ENCODE measurements at regions of chr5 and their contacts with region 1.

Region 1: GRCh38 chr5:150458819-150459557 is 9.4 kb upstream of the RPS14 start:
- DNase-seq: peak; percentile 33
- H3K4me3 ChIP-seq: peak overlapping the region in 1 of 3 experiments; percentile 17
- H3K27ac ChIP-seq: no peak overlapping the region
- H3K4me1 ChIP-seq: peaks cover 4% of the 10 kb centered on the region
- H3K27me3 ChIP-seq: no peaks in the 10 kb centered on the region
- CTCF ChIP-seq: peak; percentile 57 to 88
- POLR2A ChIP-seq: no peak

Region 2: GRCh38 chr5:150017226-150018005 is 441.6 kb before region 1 on chr5:
- CTCF ChIA-PET with region 1: no interaction called
- POLR2A ChIA-PET with region 1: no interaction called
- dilution Hi-C with region 1: no loop called
- intact Hi-C with region 1: no loop called
- DNase-seq: peak; percentile 69
- H3K4me3 ChIP-seq: no peak overlapping the region
- H3K27ac ChIP-seq: peak overlapping the region; percentile 61
- H3K4me1 ChIP-seq: peaks cover 38% of the 10 kb centered on the region
- H3K27me3 ChIP-seq: no peaks in the 10 kb centered on the region
- CTCF ChIP-seq: no peak
- POLR2A ChIP-seq: no peak

Region 3: DNA sequence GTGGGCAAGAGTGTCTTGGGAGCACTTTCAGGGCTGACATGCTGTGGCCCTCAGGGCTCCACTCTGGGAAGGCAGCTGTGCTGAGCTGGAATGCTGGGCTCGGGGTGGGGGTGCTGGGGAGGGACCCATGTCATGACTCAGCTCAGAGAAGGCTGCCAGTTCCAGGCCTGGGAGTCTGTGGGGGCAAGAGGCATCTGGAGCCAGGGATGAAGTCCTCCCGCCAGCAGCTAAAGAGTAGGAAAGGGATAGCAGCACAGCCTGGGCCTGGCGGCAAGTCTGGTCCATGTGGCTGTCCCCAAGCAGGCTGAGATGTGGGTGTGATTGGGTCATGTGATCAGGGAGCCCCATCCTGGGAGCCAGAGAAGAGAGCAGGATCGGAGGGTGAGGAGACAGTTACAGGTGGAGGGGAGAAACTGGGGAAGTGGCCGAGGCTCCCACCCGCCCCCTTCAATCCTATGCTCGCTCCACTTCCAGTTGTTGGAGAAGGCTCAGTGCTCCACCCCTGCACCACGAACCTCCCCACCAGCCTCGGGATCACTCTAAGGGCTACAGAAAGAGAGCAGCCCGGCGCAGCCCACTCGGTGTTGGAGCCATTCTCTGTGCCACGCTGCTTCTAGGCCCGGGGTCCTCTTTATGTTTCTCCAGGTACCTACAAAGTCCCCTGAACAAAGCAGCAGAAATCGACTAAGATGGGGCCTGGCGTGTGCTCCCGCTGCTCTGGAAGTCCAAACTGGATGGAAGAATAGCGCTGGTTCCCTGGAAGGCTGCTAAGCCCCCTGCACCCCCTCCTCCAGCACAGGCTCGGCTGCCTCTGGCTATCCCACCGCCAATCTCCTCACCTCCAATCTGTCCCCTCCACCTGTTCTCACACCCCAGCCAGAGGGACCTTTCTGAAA is 315.4 kb before region 1 on chr5:
- CTCF ChIA-PET with region 1: no interaction called
- POLR2A ChIA-PET with region 1: no interaction called
- dilution Hi-C with region 1: no loop called
- intact Hi-C with region 1: no loop called
- DNase-seq: no peak
- H3K4me3 ChIP-seq: no peak overlapping the region
- H3K27ac ChIP-seq: no peak overlapping the region
- H3K4me1 ChIP-seq: peaks cover 12% of the 10 kb centered on the region
- H3K27me3 ChIP-seq: no peaks in the 10 kb centered on the region
- CTCF ChIP-seq: no peak
- POLR2A ChIP-seq: no peak

Region 4: DNA sequence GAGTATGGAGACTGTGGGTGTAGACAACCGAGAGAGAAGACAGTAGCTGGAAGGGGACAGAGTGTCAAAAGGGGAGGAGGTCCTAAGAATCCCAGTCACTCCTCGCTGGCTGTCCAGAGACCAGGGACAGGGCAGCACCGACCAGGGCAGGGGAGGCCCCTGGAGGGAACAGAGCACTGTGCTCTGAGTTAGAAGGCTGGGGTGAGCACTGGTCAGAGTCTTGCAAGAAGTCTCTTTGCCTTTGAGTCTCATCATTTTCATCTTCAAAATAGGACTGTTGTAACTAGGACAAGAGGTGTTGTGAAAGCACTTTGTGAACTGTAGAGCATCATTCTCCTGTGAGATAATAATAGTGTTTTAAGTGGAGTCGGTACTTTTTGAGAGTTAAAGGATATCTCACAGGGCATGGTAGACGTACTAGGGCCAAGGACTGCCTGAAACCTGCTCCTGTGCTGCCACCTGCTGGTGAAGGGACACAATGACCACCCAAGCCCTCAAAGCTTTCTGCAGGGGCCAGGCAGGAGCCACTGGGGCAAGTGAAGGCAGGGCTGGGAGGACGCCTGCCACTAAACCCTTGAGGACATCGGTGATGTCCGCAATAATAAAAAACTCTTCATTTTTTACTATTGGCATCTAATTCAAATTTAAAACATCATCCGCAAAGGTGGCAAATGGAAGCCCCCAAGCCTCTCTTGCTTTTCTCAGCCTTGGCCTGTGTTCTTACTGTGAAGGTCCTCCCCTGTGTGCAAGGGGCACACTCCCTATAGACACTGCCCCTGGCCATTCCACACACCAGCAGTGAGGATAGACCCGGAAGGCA is 240.9 kb before region 1 on chr5:
- CTCF ChIA-PET with region 1: no interaction called
- POLR2A ChIA-PET with region 1: no interaction called
- dilution Hi-C with region 1: no loop called
- intact Hi-C with region 1: no loop called
- DNase-seq: peak; percentile 77
- H3K4me3 ChIP-seq: no peak overlapping the region
- H3K27ac ChIP-seq: no peak overlapping the region
- H3K4me1 ChIP-seq: no peaks in the 10 kb centered on the region
- H3K27me3 ChIP-seq: peaks cover 0 to 8% of the 10 kb centered on the region in 2 experiments
- CTCF ChIP-seq: peak; percentile 81 to 87
- POLR2A ChIP-seq: no peak

Region 5: GRCh38 chr5:150398722-150399523 is 60.1 kb before region 1 on chr5:
- CTCF ChIA-PET with region 1: no interaction called
- POLR2A ChIA-PET with region 1: no interaction called
- dilution Hi-C with region 1: no loop called
- intact Hi-C with region 1: no loop called
- DNase-seq: no peak
- H3K4me3 ChIP-seq: no peak overlapping the region
- H3K27ac ChIP-seq: no peak overlapping the region
- H3K4me1 ChIP-seq: no peaks in the 10 kb centered on the region
- H3K27me3 ChIP-seq: no peaks in the 10 kb centered on the region
- CTCF ChIP-seq: peak; percentile 9 to 13
- POLR2A ChIP-seq: no peak

Region 6: DNA sequence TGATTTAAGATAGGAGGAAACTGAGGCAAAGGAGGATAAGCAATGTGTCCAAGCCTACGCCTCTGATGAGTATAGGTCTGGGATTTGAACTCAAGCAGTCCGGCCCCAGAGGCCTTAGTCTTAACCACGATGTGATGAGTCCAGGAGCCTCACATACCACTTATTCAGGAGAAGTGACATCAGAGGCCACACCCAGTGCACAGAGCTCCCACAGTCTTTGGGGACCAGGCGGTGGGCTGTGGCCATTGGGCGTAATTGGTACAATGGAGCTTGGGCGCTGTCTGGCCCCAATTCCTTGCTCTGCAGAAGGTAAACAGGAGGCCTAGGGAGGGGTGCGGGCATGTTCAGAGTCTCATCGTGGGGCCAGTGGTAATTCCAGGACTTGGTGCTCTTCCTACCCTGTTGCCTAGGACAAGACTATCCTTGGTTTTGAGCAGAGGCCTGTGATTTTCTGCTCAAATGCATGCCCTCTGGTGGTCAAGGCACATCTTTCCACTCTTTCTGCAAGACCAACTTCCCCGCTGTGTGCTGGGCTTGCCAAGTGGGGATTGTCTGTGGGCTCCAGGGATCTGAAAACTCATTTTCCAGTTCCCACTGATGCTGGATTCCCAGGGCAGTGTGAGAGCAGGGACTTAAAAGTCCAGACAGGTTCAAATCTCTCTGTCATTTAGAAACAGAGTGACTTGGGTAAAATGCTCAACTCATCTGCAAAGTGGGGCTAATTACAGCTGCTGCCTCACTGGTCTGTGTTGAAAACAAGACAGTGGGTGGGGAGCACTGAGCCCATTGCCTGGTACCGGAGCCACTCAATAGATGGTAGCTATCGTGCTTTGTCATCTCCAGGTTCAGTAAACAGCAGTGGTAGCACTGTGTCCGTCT is 64.7 kb after region 1 on chr5:
- CTCF ChIA-PET with region 1: interaction called, 78 read pairs
- POLR2A ChIA-PET with region 1: no interaction called
- dilution Hi-C with region 1: no loop called
- intact Hi-C with region 1: loop called (anchors 1 kb)
- DNase-seq: peak; percentile 69
- H3K4me3 ChIP-seq: no peak overlapping the region
- H3K27ac ChIP-seq: no peak overlapping the region
- H3K4me1 ChIP-seq: no peaks in the 10 kb centered on the region
- H3K27me3 ChIP-seq: no peaks in the 10 kb centered on the region
- CTCF ChIP-seq: peak; percentile 67 to 80
- POLR2A ChIP-seq: no peak

Region 7: DNA sequence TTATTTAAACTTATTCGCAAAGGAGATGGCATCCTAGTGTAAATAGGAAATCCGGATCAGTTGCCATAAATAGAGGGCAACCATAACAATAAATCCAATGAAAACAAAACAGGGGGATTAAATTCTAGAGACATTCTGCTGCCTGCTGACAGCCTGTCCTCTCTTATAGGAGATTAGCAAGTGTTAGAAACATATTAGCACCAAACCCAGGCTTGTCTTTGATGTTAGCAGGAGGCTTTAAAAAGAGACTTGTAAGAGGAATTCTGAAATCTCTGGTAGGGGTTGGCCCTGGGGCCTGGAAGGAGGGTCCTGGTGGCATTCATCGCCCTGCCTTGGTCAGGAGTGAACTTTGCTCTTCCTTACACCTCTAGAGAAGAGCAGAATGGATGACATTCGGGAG is 70.6 kb after region 1 on chr5:
- CTCF ChIA-PET with region 1: interaction called, 78 read pairs
- POLR2A ChIA-PET with region 1: no interaction called
- dilution Hi-C with region 1: no loop called
- intact Hi-C with region 1: no loop called
- DNase-seq: no peak
- H3K4me3 ChIP-seq: no peak overlapping the region
- H3K27ac ChIP-seq: no peak overlapping the region
- H3K4me1 ChIP-seq: no peaks in the 10 kb centered on the region
- H3K27me3 ChIP-seq: no peaks in the 10 kb centered on the region
- CTCF ChIP-seq: no peak
- POLR2A ChIP-seq: no peak

Region 8: GRCh38 chr5:150544611-150545219 is 85.7 kb after region 1 on chr5:
- CTCF ChIA-PET with region 1: interaction called, 168 read pairs
- POLR2A ChIA-PET with region 1: no interaction called
- dilution Hi-C with region 1: no loop called
- intact Hi-C with region 1: loop called (anchors 1 kb)
- DNase-seq: peak; percentile 69
- H3K4me3 ChIP-seq: no peak overlapping the region
- H3K27ac ChIP-seq: no peak overlapping the region
- H3K4me1 ChIP-seq: peaks cover 20% of the 10 kb centered on the region
- H3K27me3 ChIP-seq: no peaks in the 10 kb centered on the region
- CTCF ChIP-seq: peak; percentile 95 to 97
- POLR2A ChIP-seq: no peak

Region 9: DNA sequence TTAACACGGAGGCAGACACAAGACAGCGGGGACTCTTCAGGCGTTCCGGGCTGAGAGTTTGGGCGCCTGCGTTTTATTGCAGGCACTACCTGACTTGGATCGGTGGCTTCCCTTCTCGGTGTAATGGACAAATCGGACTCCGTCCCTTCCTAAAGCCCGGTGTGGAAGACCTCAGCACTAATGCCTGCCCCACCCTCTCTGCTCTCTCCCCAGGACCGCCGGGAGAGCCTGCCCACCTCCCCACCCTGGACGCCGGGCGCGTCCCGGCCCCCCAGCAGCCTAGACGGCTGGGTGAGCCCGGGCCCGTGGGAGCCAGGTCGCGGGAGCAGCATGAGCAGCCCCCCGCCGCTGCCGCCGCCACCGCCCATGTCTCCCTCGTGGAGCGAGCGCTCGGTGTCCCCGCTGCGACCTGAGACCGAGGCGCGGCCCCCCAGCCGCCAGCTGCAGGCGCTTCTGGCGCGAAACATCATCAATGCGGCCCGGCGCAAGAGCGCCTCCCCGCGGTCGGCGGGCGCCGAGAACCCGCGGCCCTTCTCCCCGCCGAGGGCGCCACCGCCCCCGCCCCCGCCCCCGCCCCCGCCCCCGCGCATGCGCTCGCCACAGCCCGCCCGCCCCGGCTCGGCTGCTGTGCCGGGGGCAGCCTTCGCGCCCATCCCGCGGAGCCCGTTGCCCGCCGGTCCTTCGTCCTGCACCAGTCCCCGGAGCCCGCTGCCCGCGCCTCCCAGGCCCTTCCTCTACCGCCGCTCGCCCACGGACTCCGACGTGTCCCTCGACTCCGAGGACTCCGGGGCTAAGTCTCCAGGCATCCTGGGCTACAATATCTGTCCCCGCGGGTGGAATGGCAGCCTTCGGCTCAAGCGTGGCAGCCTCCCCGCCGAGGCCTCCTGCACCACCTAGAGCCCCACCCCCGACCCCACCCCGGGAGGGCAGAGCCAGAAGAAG is 197.5 kb after region 1 on chr5:
- CTCF ChIA-PET with region 1: interaction called, 4 read pairs
- POLR2A ChIA-PET with region 1: no interaction called
- dilution Hi-C with region 1: no loop called
- intact Hi-C with region 1: loop called (anchors 2 kb)
- DNase-seq: peak; percentile 46
- H3K4me3 ChIP-seq: no peak overlapping the region
- H3K27ac ChIP-seq: no peak overlapping the region
- H3K4me1 ChIP-seq: no peaks in the 10 kb centered on the region
- H3K27me3 ChIP-seq: peaks cover under 1 to 7% of the 10 kb centered on the region in 2 experiments
- CTCF ChIP-seq: peak; percentile 34 to 70
- POLR2A ChIP-seq: peak; percentile 58

Region 10: DNA sequence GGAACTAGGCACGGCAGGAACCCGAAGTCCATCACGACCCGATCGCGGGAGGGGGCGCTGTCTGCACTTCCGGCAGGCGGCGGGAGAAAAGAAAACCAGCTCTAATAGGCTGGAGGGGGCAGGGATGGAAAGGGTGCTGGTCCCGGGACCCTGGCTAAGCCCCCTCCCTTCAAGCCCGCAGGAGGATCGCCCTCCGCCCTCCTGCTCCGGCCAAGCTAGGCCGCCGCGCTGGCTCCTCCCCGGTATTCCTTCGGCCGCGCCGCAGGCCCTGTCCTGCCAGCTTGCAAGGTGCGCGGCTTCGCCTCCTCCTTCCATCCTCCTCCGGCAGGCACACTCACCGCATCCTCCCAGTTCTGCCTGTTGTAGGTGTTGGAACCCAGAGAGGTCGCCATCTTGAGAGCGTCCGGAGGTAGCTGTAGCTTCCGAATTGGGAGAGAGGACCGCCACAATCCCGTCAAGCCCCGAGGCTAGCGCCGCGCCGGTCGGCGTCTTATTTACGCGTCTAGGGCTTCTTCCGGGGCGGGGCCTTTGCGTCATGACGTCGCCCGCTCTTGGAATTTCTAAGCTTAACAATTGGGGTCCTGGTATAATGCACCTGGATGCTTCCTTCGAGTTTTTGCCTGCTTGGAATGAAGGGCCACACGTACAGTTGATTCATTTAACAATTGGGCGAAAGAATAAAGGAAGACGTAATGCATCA is 241.8 kb after region 1 on chr5 and contains the start of gene RBM22:
- CTCF ChIA-PET with region 1: no interaction called
- POLR2A ChIA-PET with region 1: no interaction called
- dilution Hi-C with region 1: no loop called
- intact Hi-C with region 1: loop called (anchors 5 kb)
- DNase-seq: peak; percentile 92
- H3K4me3 ChIP-seq: peak within 1 kb of the TSS; percentile 45 to 98 (median 69)
- H3K27ac ChIP-seq: peak within 1 kb of the TSS; percentile 73
- H3K4me1 ChIP-seq: peaks cover 13% of the 10 kb centered on the region
- H3K27me3 ChIP-seq: peaks cover 3 to 6% of the 10 kb centered on the region in 2 experiments
- CTCF ChIP-seq: peak; percentile 40 to 78
- POLR2A ChIP-seq: peak; percentile 93
- total RNA-seq, gene RBM22: 44.4 and 51.2 TPM in 2 replicates

Region 11: GRCh38 chr5:150846654-150847333 is 387.8 kb after region 1 on chr5:
- CTCF ChIA-PET with region 1: interaction called, 7 read pairs
- POLR2A ChIA-PET with region 1: no interaction called
- dilution Hi-C with region 1: no loop called
- intact Hi-C with region 1: loop called (anchors 5 kb)
- DNase-seq: peak; percentile 86
- H3K4me3 ChIP-seq: no peak overlapping the region
- H3K27ac ChIP-seq: no peak overlapping the region
- H3K4me1 ChIP-seq: no peaks in the 10 kb centered on the region
- H3K27me3 ChIP-seq: peaks cover 3 to 6% of the 10 kb centered on the region in 2 experiments
- CTCF ChIP-seq: peak; percentile 20 to 41
- POLR2A ChIP-seq: no peak